ENCODE measurements at regions of chr6 and their contacts with region 1.

Region 1: DNA sequence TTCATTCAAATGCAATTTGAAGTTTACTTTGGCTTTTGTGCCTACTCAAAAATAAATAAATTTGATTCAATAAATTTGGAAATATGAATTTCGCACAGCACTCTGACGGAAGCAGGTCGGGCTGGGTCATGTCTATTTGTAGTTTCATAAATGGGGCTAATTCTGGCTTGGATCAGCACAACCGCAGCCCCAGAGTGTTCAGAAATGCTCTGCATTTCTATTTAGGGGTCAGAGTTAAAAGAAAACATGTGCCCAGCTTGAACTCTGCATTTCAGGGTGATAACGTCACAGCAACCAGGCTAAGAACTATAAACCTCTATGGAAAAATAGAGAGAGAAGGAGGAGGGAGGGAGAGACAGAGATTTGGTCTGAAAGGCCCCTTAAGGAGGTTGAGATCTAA is 480.9 kb upstream of the NOX3 start:
- DNase-seq: peak in 1 of 2 donors; percentile 80
- H3K4me3 ChIP-seq: no peak overlapping the region
- H3K27ac ChIP-seq: peak overlapping the region; percentile 13 to 31
- H3K4me1 ChIP-seq: peaks cover 0 to 4% of the 10 kb centered on the region in 2 donors
- H3K27me3 ChIP-seq: no peaks in the 10 kb centered on the region
- CTCF ChIP-seq: no peak

Region 2: GRCh38 chr6:155755452-155755851 is 181.1 kb before region 1 on chr6:
- intact Hi-C with region 1: no loop called
- DNase-seq: no peak
- H3K4me3 ChIP-seq: no peak overlapping the region
- H3K27ac ChIP-seq: no peak overlapping the region
- H3K4me1 ChIP-seq: no peaks in the 10 kb centered on the region
- H3K27me3 ChIP-seq: no peaks in the 10 kb centered on the region
- CTCF ChIP-seq: no peak

Region 3: GRCh38 chr6:155980768-155981079 is 44.2 kb after region 1 on chr6:
- intact Hi-C with region 1: loop called (anchors 5 kb)
- DNase-seq: no peak
- H3K4me3 ChIP-seq: no peak overlapping the region
- H3K27ac ChIP-seq: peak overlapping the region in 1 of 2 donors; percentile 4
- H3K4me1 ChIP-seq: peaks cover 0 to 14% of the 10 kb centered on the region in 2 donors
- H3K27me3 ChIP-seq: no peaks in the 10 kb centered on the region
- CTCF ChIP-seq: no peak

Measured in ascending aorta (tissue), 2 donors.